H1 (cell line): ENCODE measurements at regions of chrX and their contacts with region 1.

Region 1: DNA sequence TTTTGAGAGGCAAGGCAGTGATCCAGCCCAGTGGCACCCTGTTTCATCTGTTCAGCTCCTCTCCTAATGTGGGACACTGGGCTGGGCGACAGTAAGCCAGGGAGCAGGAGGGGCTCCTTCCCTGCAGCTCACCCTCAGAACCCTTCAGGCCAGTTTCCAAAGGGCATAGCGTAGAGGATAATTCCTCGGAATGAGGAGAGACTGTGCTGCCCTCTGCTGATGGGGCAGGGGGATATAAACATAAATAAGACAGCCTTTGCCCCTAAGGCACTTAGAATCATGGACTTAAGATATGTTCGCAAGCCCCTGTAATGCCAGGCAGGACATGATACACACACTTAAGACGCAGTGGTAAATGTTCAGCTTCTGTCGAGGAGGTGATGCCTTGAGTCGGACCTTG is 27.9 kb upstream of the ZNF185 start:
- DNase-seq: no peak
- H3K4me3 ChIP-seq: no peak overlapping the region
- H3K27ac ChIP-seq: no peak overlapping the region
- H3K4me1 ChIP-seq: no peaks in the 10 kb centered on the region
- H3K27me3 ChIP-seq: no peaks in the 10 kb centered on the region
- CTCF ChIP-seq: peak in 2 of 3 experiments; percentile 23 to 47; a peak in 2 of 4 replicates
- EP300 ChIP-seq: no peak
- POLR2A ChIP-seq: no peak
- RAD21 ChIP-seq: peak; percentile 31 to 44; a peak in 3 of 4 replicates

Region 2: DNA sequence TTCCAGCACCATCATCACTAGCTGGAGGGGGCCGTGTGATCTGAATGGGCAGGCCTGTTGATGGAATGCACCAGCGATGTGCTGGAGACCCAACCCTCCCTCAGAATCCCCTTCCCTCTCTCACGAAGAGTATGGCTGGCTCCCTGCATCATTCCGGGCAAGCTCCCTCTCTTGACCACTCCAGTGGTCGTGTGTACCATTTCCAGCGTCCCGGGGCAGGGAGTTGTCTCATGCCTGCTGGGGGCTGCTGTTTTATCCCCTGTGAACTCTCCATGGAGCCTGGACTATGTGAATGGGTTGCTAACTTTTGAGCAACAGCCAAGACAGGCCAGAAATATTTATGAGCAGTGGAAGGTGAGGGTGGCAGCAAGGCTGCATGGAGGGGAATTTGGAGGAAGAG is 144.6 kb before region 1 on chrX:
- CTCF ChIA-PET with region 1: no interaction called
- POLR2A ChIA-PET with region 1: no interaction called
- DNase-seq: no peak
- H3K4me3 ChIP-seq: no peak overlapping the region
- H3K27ac ChIP-seq: no peak overlapping the region
- H3K4me1 ChIP-seq: no peaks in the 10 kb centered on the region
- H3K27me3 ChIP-seq: no peaks in the 10 kb centered on the region
- CTCF ChIP-seq: no peak
- EP300 ChIP-seq: no peak
- POLR2A ChIP-seq: no peak
- RAD21 ChIP-seq: no peak

Region 3: GRCh38 chrX:152886716-152887115 is 16.7 kb after region 1 on chrX:
- CTCF ChIA-PET with region 1: interaction called, 7 read pairs
- POLR2A ChIA-PET with region 1: interaction called, 13 read pairs
- DNase-seq: no peak
- H3K4me3 ChIP-seq: no peak overlapping the region
- H3K27ac ChIP-seq: no peak overlapping the region
- H3K4me1 ChIP-seq: peaks cover 0 to 14% (median 7%) of the 10 kb centered on the region in 4 experiments
- H3K27me3 ChIP-seq: peaks cover 0 to 2% (median 0%) of the 10 kb centered on the region in 4 experiments; a peak in 1 of 7 replicates
- CTCF ChIP-seq: no peak
- EP300 ChIP-seq: no peak
- POLR2A ChIP-seq: no peak
- RAD21 ChIP-seq: no peak

Region 4: DNA sequence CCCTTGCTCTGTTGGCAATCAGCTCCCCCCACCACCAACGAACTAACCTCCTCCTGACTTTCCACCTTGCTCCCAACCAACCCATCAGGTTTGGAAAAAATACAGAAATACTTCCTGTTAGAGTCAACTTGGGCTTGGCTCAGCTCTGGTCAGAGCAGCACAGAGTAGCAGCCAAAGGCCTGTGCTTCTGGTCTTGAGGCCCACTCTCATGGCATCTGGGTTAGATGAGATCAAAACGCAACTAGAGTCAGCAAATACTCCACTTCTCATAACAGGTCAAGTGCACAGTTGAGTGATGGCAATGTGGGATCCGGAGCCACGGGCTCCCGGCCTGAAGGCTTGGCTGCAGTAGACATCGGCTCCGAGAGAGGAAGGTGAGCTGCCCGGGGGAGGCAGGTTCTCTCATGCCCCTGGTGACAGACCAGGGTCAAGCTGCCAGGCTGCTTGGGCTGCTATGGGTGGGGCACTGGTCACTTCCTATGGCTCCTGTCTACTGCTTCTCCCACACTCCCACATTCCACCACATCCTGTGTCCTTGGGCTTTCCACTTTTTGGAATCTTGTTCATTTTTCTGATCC is 62.7 kb after region 1 on chrX:
- CTCF ChIA-PET with region 1: no interaction called
- POLR2A ChIA-PET with region 1: no interaction called
- DNase-seq: no peak
- H3K4me3 ChIP-seq: no peak overlapping the region
- H3K27ac ChIP-seq: no peak overlapping the region
- H3K4me1 ChIP-seq: no peaks in the 10 kb centered on the region
- H3K27me3 ChIP-seq: no peaks in the 10 kb centered on the region
- CTCF ChIP-seq: no peak
- EP300 ChIP-seq: no peak
- POLR2A ChIP-seq: no peak
- RAD21 ChIP-seq: no peak